ENCODE measurements at regions of chr9 and their contacts with region 1.

Region 1: GRCh38 chr9:71716138-71716909 is 52.0 kb downstream of the CEMIP2 start:
- DNase-seq: no peak
- H3K4me3 Mint-ChIP-seq: no peak overlapping the region
- H3K27ac Mint-ChIP-seq: no peak overlapping the region
- H3K4me1 Mint-ChIP-seq: peaks cover 3% of the 10 kb centered on the region
- H3K27me3 Mint-ChIP-seq: no peaks in the 10 kb centered on the region

Region 2: DNA sequence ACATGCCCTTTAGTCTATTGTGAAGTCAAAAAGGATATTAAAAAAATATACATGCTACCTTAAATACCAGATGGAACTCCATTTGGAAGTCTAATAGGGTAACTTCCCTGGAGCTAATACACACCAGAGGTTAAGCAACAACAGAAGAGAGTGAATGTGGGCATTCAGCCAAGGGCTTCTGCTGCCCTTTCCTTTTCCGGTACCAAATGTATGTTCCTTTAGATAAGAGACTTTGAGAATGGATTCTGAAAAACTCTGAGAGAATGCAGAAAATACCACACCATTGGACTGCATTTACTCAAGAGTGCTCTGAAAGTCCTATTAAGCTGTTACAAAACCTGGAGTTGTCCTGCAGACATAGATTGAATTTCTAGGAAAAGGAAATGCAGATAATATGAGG is 571.1 kb before region 1 on chr9:
- CTCF ChIA-PET with region 1: no interaction called
- POLR2A ChIA-PET with region 1: no interaction called
- DNase-seq: no peak
- H3K4me3 Mint-ChIP-seq: no peak overlapping the region
- H3K27ac Mint-ChIP-seq: no peak overlapping the region
- H3K4me1 Mint-ChIP-seq: no peaks in the 10 kb centered on the region
- H3K27me3 Mint-ChIP-seq: no peaks in the 10 kb centered on the region

Region 3: DNA sequence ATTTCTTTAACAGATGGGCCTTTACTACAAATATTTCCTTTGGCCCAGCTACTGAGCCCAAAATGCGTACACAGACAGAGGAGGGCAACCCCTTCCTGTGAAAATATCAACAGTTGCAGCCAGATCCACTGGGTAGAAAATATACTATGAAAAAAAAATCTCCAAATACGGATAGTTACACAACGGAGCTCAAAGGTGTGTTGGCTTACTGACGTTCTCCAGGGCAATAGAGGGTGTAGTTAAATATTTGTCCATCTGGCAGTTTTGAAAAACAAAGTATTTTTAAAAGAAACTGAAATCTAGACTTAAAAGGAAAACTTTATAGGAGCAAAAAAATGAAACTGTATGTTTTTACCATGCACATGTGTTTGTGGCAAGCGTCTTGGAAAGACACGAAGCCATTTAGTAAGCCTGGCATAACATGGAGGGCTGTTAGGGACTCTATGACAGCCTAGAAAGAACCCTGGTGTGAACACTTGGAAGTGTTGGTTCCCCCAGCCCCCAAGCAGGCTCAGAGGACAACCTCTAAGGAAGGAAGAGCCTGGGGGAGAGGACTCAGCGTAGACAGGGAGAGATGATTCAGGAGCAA is 437.1 kb before region 1 on chr9:
- CTCF ChIA-PET with region 1: no interaction called
- POLR2A ChIA-PET with region 1: no interaction called
- DNase-seq: no peak
- H3K4me3 Mint-ChIP-seq: no peak overlapping the region
- H3K27ac Mint-ChIP-seq: no peak overlapping the region
- H3K4me1 Mint-ChIP-seq: no peaks in the 10 kb centered on the region
- H3K27me3 Mint-ChIP-seq: no peaks in the 10 kb centered on the region

Region 4: GRCh38 chr9:71490810-71491209 is 225.5 kb before region 1 on chr9:
- CTCF ChIA-PET with region 1: no interaction called
- POLR2A ChIA-PET with region 1: no interaction called
- DNase-seq: no peak
- H3K4me3 Mint-ChIP-seq: no peak overlapping the region
- H3K27ac Mint-ChIP-seq: no peak overlapping the region
- H3K4me1 Mint-ChIP-seq: no peaks in the 10 kb centered on the region
- H3K27me3 Mint-ChIP-seq: peaks cover 13% of the 10 kb centered on the region

Region 5: DNA sequence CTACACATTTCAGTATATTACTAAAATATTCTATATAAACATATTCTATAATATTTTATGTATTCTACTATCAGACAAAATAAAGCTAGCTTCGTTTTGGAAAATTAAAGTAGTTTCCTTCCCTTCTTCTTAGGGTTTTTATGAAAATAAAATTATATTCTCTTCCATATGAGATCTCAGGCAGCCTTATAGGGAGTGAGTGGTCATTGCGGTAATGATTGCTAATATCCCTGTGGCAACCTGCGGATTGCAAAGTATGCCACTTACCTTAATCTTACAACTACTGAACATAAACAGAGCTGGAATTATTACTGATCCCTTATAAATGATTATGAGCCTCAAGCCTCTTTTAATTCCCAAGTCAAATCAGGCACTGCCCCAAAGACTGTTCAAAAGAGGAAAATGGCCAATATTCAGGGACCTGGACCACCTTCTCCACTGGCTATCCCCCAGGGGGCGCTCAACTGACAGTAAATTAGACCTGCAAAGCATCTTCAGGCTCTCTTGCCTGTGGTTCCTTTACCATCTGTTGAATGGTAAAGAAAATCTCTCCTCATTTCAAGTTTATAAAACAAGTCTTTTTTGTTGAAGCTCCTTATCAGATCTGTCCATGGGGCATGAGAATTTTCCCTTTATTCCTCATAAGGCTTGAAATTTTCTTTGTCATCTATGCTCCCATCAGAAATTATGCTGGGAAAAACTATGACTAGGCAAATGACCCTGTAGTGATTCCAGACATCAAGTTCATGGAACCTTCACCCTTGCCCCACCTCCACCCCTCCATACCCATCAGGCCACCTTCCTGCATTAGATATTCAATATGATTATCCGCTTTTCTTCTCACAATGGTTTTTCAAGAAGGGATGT is 111.9 kb before region 1 on chr9:
- CTCF ChIA-PET with region 1: interaction called, 21 read pairs
- POLR2A ChIA-PET with region 1: no interaction called
- DNase-seq: peak; percentile 85
- H3K4me3 Mint-ChIP-seq: no peak overlapping the region
- H3K27ac Mint-ChIP-seq: no peak overlapping the region
- H3K4me1 Mint-ChIP-seq: no peaks in the 10 kb centered on the region
- H3K27me3 Mint-ChIP-seq: peaks cover 7% of the 10 kb centered on the region

Region 6: DNA sequence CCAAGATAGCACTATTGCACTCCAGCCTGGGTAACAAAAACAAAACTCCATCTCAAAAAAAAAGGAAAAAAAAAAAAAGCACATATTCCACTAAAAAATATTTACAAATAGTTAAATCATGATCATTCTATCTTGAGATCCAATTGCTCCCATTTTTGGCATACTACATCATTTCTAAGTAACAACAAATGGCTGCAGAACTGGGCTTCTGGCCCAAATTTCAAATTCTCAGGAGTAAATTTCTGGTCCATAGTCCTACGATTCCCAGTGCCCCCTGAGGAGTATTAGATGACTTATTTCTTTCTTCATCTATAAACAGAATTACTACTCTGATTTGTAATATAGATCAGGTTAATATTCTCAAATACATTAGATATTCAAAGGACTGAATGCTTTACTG is 10.1 kb before region 1 on chr9:
- CTCF ChIA-PET with region 1: interaction called, 11 read pairs
- POLR2A ChIA-PET with region 1: interaction called, 4 read pairs
- DNase-seq: no peak
- H3K4me3 Mint-ChIP-seq: no peak overlapping the region
- H3K27ac Mint-ChIP-seq: no peak overlapping the region
- H3K4me1 Mint-ChIP-seq: peaks cover 21% of the 10 kb centered on the region
- H3K27me3 Mint-ChIP-seq: no peaks in the 10 kb centered on the region

Measured in activated CD4-positive, alpha-beta memory T cell treated with anti-CD3 and anti-CD28 coated beads, Interleukin-2, amount 10 ng/mL, durations not matched to agents 7 days and 5 days (primary cell).